Dendritic cell treated with granulocyte-macrophage colony-stimulating factor and Interleukin-4, amounts not matched to agents 40 ng/mL and 50 ng/mL, for 4 days (primary cell): ENCODE measurements at regions of chr1 and their contacts with region 1.

Region 1: DNA sequence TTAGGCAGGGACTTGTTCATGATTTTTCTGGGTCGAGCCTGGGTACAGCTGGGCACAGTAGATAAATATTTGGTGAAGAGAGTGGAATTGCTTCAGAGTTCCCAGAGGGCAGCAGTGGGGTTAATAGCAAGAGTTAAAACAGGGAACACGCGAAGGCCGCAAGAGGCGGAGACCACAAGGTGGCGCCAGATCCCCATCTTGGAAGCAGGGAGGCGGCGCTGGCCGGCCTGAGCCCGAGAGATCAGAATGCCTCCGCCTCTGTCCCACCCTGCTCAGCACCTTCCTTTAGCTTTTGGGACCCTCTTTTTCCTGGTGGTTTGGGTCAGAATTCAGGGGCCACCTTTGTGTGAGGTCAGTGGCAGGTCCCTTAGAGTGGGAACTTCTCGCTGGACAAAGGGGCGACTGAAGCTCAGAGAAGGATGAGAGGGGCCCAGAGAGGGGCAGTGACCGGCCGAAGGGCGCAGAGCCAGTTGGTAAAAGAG is 6.5 kb upstream of the PADI2 start:
- H3K4me3 Mint-ChIP-seq: peak overlapping the region; percentile 6
- H3K27ac Mint-ChIP-seq: no peak overlapping the region
- H3K4me1 Mint-ChIP-seq: peaks cover 47% of the 10 kb centered on the region
- H3K27me3 Mint-ChIP-seq: no peaks in the 10 kb centered on the region

Region 2: GRCh38 chr1:16938351-16939321 is 187.2 kb before region 1 on chr1:
- intact Hi-C with region 1: no loop called
- H3K4me3 Mint-ChIP-seq: no peak overlapping the region
- H3K27ac Mint-ChIP-seq: no peak overlapping the region
- H3K4me1 Mint-ChIP-seq: no peaks in the 10 kb centered on the region
- H3K27me3 Mint-ChIP-seq: no peaks in the 10 kb centered on the region

Region 3: DNA sequence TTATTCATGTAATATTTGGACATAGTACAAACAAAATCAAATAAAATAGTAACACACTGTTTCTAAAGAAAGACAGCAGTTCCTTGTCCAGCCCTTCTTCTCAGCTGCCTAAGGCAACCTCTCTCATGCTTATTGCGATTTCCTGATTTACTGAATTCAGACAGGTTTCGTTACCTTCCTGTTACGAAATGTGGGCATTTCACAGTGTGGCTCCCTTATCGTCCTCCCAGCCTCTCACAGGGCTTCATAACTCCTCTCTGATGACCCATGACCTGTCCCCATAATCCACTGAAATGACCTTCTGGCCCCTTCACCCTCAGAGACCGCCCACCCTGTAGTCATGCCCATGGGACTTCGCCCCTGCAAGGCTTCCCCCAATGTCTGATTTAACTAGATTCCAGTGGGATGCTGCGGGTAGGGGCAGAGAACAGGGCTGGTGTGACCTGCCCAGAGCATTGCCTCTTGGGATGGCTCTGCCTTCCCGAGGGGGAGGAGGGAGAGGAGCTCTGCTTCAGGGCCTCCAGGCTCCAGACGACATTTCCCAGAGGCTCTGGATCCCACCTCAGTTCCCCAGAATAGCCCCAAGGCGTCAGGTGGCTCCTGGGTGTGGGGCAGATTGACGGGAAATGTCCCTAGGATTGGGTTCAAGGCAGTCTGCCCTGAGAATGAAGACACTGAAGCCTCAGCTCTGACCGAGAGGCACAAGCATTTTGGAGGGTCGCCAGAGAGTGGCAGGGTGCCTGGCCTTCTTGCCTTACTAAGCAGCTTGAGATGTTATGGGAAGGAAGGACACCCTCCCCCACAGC is 27.1 kb before region 1 on chr1:
- intact Hi-C with region 1: no loop called
- H3K4me3 Mint-ChIP-seq: no peak overlapping the region
- H3K27ac Mint-ChIP-seq: no peak overlapping the region
- H3K4me1 Mint-ChIP-seq: peaks cover 24% of the 10 kb centered on the region
- H3K27me3 Mint-ChIP-seq: no peaks in the 10 kb centered on the region

Region 4: GRCh38 chr1:17236779-17237560 is 111.2 kb after region 1 on chr1:
- intact Hi-C with region 1: loop called (anchors 1 kb)
- H3K4me3 Mint-ChIP-seq: no peak overlapping the region
- H3K27ac Mint-ChIP-seq: no peak overlapping the region
- H3K4me1 Mint-ChIP-seq: peaks cover 27% of the 10 kb centered on the region
- H3K27me3 Mint-ChIP-seq: peaks cover 7% of the 10 kb centered on the region

Region 5: GRCh38 chr1:17335821-17336710 is 210.3 kb after region 1 on chr1:
- intact Hi-C with region 1: loop called (anchors 1 kb)
- H3K4me3 Mint-ChIP-seq: no peak overlapping the region
- H3K27ac Mint-ChIP-seq: no peak overlapping the region
- H3K4me1 Mint-ChIP-seq: no peaks in the 10 kb centered on the region
- H3K27me3 Mint-ChIP-seq: no peaks in the 10 kb centered on the region

Region 6: DNA sequence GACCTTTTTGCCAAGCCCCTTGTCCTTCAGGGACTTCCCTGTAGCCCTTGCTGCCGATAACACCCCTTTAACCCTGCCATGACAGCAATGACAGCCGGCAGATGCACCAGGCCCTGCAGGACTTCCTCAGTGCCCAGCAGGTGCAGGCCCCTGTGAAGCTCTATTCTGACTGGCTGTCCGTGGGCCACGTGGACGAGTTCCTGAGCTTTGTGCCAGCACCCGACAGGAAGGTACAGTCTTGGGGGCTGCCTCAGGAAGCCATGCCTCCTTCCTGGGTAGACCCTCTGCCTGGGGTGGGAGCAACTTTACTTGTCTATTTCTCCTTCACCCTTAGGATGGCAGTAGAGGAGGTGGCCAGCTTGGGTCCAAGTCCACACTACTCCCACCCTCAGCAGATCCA is 230.1 kb after region 1 on chr1:
- intact Hi-C with region 1: no loop called
- H3K4me3 Mint-ChIP-seq: no peak overlapping the region
- H3K27ac Mint-ChIP-seq: no peak overlapping the region
- H3K4me1 Mint-ChIP-seq: peaks cover 19% of the 10 kb centered on the region
- H3K27me3 Mint-ChIP-seq: no peaks in the 10 kb centered on the region

Region 7: DNA sequence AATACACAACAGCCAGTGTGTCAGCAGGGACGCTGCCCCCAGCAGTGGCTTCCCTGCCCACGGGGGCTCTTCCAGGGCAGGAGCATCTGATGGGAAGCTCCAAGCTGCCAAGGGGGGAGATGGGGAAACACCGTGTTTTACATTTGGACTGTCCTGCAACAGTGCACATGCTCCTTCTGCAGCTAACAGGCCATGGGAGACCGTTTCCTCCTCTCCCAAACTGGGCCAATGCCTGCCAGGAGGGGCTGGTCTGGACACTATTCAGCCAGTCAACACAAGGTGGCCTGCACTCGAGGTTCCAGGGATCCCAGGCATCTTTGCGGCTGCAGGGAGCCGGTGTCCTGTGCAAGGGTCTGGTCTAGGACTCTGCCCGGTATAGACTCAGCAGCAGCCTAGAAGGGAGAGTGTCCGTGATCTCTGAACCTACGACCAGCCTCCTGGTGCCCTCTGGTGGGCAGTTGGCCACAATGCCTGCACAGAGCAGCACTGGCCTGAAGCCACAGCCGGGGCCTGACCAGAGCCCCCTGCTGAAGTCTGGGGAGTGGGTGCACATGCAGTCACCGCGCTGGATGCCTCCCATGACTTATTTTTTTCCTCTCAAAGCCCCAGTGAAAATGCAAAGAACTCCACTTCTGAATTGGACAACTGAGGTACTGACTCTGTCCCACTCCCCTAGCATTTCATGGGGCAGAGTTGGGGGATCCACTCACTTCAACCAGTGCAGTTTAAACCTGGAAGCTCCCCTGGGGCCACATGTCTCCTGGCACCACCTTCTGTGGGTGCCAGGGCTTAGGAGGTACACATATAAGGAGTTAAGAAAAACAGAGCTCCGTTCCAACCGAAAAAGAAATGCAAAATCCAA is 280.3 kb after region 1 on chr1:
- intact Hi-C with region 1: loop called (anchors 1 kb)
- H3K4me3 Mint-ChIP-seq: no peak overlapping the region
- H3K27ac Mint-ChIP-seq: no peak overlapping the region
- H3K4me1 Mint-ChIP-seq: peaks cover 5% of the 10 kb centered on the region
- H3K27me3 Mint-ChIP-seq: peaks cover 2% of the 10 kb centered on the region